ENCODE measurements at regions of chr9 and their contacts with region 1.

Region 1: GRCh38 chr9:4315582-4316215 is 15.8 kb upstream of the GLIS3 start:
- DNase-seq: peak; percentile 70 to 84 (median 79)
- H3K4me3 ChIP-seq: no peak overlapping the region
- H3K27ac ChIP-seq: no peak overlapping the region
- H3K4me1 ChIP-seq: no peaks in the 10 kb centered on the region
- H3K27me3 ChIP-seq: peaks cover 0 to 4% (median 0%) of the 10 kb centered on the region in 5 experiments

Region 2: GRCh38 chr9:4301971-4302427 is 13.7 kb before region 1 on chr9:
- CTCF ChIA-PET with region 1: interaction called, 12 read pairs
- POLR2A ChIA-PET with region 1: interaction called, 3 read pairs
- DNase-seq: peak in 2 of 3 donors; percentile 30 to 31
- H3K4me3 ChIP-seq: no peak overlapping the region
- H3K27ac ChIP-seq: no peak overlapping the region
- H3K4me1 ChIP-seq: peaks cover 0 to 31% (median 28%) of the 10 kb centered on the region in 4 experiments
- H3K27me3 ChIP-seq: peaks cover 5 to 52% (median 26%) of the 10 kb centered on the region in 5 experiments

Region 3: DNA sequence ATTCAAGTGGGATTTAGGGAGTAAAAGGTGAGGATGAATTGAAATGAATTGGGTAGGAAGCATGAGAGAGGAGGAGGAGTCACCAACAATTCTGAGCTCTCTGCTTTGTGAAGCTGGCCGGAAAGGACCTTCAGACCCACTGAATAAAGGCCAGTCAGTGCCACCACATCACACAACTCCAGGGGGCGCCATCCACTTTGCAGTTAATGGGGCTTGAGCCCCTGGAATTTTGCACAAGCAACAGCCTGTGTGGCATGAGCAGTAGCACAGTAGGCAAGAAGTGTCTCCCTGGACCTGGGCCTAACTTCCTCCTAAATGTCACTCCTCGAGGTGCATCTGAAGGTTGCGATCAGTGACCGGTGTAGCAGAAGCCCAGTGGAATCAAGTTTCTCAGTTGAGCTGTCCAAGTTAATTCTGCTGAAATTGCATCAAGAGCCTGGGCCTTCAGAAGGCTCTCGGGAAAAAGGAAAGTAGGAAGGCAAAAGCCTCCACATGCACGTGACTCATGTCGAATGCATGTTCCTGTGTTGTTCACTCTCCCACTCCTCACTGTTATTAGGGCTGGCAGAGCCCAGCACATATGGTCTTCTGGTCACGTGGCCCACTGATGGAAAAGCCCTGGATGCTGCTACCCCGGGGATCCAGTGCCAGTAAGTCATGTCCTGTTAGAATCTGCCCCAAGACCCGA is 11.9 kb after region 1 on chr9:
- CTCF ChIA-PET with region 1: interaction called, 54 read pairs
- POLR2A ChIA-PET with region 1: no interaction called
- DNase-seq: no peak
- H3K4me3 ChIP-seq: no peak overlapping the region
- H3K27ac ChIP-seq: no peak overlapping the region
- H3K4me1 ChIP-seq: no peaks in the 10 kb centered on the region
- H3K27me3 ChIP-seq: no peaks in the 10 kb centered on the region

Region 4: GRCh38 chr9:4339357-4339756 is 23.7 kb after region 1 on chr9:
- CTCF ChIA-PET with region 1: interaction called, 58 read pairs
- POLR2A ChIA-PET with region 1: no interaction called
- DNase-seq: peak; percentile 86 to 95 (median 95)
- H3K4me3 ChIP-seq: peak overlapping the region in 1 of 7 experiments; percentile 20
- H3K27ac ChIP-seq: no peak overlapping the region
- H3K4me1 ChIP-seq: peaks cover 0 to 4% (median 0%) of the 10 kb centered on the region in 4 experiments
- H3K27me3 ChIP-seq: peaks cover 0 to 3% (median 0%) of the 10 kb centered on the region in 5 experiments

Region 5: GRCh38 chr9:4366591-4367330 is 51.1 kb after region 1 on chr9:
- CTCF ChIA-PET with region 1: interaction called, 44 read pairs
- POLR2A ChIA-PET with region 1: no interaction called
- DNase-seq: peak; percentile 23 to 52 (median 48)
- H3K4me3 ChIP-seq: no peak overlapping the region
- H3K27ac ChIP-seq: no peak overlapping the region
- H3K4me1 ChIP-seq: no peaks in the 10 kb centered on the region
- H3K27me3 ChIP-seq: peaks cover 0 to 2% (median 0%) of the 10 kb centered on the region in 5 experiments